Testis (tissue), 5 donors: ENCODE measurements at regions of chr12 and their contacts with region 1.

Region 1: DNA sequence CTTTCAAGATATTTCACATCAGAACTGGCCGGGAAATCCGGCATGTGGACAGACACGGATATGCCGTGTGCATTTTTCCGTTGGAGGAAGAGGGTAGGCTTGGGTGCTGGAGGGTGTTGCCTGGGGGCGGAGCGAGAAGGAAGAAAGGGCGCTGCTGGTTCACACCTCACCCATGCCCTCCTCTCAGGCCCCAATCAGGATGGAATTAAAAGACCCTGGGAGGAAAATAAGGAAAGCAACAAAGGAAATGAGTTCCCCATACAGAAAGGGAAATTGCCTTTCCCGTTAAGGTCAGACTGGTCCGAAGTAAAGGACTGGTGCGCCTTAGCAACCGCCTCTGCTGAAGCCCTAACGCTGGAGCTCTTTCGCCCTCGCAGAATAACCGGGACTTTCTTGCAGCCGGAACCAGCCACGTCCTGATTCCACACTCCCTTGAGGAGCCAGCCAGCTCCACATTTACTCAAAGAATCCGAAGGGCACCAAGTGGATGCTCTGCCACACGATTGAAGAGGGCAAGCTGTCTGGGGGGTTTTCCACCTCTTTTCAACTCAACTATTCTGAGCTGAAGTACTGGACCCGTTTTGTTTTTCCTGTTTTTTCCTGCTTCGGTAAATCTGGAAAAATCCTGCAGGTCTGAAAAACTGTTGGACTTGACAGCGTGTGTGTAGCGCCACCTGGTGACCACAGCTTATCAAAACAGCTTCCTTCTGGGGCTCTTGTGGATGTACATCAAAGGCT is 37.7 kb upstream of the BCL2L14 start:
- DNase-seq: peak; percentile 86
- H3K4me3 ChIP-seq: peak overlapping the region; percentile 19 to 27
- H3K27ac ChIP-seq: peak overlapping the region; percentile 50 to 57
- H3K4me1 ChIP-seq: peaks cover 5% of the 10 kb centered on the region
- H3K27me3 ChIP-seq: no peaks in the 10 kb centered on the region
- CTCF ChIP-seq: peak; percentile 74 to 91 (median 90)
- POLR2A ChIP-seq: no peak

Region 2: DNA sequence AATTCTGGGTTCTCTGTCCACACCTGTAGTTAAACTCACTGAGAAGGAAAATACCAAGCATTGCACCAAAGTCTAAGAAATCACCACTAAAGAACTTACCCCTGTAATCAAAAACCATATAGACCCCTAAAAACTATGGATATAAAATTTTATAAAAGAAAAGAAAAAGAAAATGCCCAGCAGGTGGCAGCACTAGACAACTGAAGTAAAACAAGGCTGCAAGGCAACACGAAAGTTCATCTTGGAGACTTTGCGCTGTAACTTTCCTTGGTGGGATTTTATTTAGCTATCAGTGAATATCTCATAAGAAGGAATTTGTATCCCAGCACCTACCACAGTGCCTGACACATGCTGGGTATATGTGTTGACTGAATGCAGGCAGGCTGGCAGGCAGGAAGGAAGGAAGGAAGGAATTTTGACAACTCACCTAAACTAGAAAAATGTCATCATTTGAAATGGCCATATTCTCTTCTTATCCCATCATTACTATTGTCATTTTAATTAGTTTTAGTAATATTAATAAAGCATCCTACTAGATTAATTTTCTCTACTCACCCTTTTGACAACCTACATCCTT is 451.8 kb before region 1 on chr12:
- intact Hi-C with region 1: loop called (anchors 5 kb)
- DNase-seq: peak; percentile 86
- H3K4me3 ChIP-seq: no peak overlapping the region
- H3K27ac ChIP-seq: no peak overlapping the region
- H3K4me1 ChIP-seq: no peaks in the 10 kb centered on the region
- H3K27me3 ChIP-seq: no peaks in the 10 kb centered on the region
- CTCF ChIP-seq: peak; percentile 72 to 80 (median 72)
- POLR2A ChIP-seq: no peak